SK-N-SH (cell line): ENCODE measurements at regions of chr2 and their contacts with region 1.

Region 1: DNA sequence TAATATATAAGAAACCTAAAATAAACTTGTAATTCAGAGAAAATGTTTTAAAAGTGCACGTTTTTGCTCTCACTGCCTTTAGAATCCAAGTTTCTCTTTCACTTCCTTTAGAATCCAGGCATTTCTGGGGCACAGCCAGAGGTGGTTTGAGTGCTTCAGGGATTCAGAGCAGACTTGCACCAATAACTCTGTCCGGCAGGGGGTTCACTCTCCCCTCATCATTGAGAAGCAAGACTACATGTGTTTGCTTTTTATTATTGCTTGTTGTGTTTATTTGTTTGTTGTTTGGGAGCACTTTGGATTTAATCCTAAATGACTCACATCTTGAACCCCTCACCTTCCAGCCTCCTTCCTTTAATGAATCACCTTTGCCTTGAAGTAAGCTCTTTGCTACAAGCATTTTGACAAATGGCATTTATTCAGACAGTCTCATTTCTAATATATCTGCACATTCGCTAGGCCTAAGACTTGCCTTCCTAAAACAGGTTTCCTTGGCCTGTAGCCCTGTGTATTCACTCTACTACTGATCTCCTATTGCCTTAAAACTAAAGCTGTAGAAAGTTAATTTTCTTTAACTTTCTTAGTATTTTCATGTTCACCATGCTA is 233.5 kb upstream of the ATP5MC3 start:
- DNase-seq: peak; percentile 58
- H3K4me3 ChIP-seq: no peak overlapping the region; a peak in 1 of 4 replicates
- H3K27ac ChIP-seq: no peak overlapping the region
- H3K4me1 ChIP-seq: peaks cover 0 to 12% of the 10 kb centered on the region in 2 experiments; a peak in 2 of 4 replicates
- H3K27me3 ChIP-seq: no peaks in the 10 kb centered on the region
- CTCF ChIP-seq: peak; percentile 68
- EP300 ChIP-seq: no peak
- RAD21 ChIP-seq: peak; percentile 79

Region 2: DNA sequence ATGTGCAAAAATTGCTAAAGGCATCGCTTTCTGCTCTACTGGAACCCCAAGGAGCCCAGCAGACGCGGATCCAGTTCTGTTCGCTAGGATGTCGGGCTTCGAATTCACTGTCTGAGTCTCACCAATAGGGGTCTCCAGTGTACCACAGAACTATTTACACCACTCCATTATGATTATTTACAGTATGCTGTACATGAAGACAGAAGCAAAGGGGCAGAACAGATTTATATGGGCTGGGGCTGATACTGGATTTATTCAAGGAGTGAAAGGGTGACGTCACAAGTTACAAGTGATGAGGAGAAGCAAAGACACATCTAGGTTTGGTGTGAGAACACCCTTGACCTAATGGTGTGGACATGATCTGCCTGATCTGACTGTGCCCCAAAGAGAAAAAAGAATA is 48.2 kb before region 1 on chr2:
- CTCF ChIA-PET with region 1: interaction called, 19 read pairs
- POLR2A ChIA-PET with region 1: no interaction called
- DNase-seq: peak; percentile 49
- H3K4me3 ChIP-seq: peak overlapping the region in 1 of 2 experiments; percentile 47; a peak in 1 of 4 replicates
- H3K27ac ChIP-seq: no peak overlapping the region
- H3K4me1 ChIP-seq: peaks cover 0 to 19% of the 10 kb centered on the region in 2 experiments; a peak in 2 of 4 replicates
- H3K27me3 ChIP-seq: no peaks in the 10 kb centered on the region; the same call in 1 of the 2 replicates
- CTCF ChIP-seq: peak; percentile 83
- EP300 ChIP-seq: no peak; a peak in 1 of 4 replicates
- RAD21 ChIP-seq: peak; percentile 94

Region 3: DNA sequence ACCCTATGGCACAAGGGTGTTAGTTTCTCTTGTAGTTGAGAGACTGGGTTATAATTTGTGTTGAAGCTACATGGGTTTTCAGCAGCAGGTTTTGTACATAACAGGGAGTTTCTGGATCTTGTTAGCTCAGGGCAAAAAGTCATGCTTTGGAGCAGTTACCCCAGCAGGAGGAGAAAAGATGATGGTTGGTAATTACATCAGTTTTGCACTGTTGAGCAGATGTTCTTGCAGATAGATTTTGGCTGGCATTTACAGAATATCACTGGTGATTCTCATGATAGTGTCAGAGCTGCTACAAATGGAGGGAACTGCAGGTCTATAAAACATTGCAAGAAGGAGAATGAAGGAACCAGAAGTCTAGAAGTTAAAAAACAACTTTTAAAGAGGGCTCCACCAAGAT is 18.3 kb before region 1 on chr2:
- CTCF ChIA-PET with region 1: interaction called, 11 read pairs
- POLR2A ChIA-PET with region 1: no interaction called
- DNase-seq: peak; percentile 47
- H3K4me3 ChIP-seq: no peak overlapping the region
- H3K27ac ChIP-seq: peak overlapping the region in 1 of 2 experiments; percentile 72; a peak in 2 of 4 replicates
- H3K4me1 ChIP-seq: peaks cover 0 to 8% of the 10 kb centered on the region in 2 experiments; a peak in 2 of 4 replicates
- H3K27me3 ChIP-seq: no peaks in the 10 kb centered on the region
- CTCF ChIP-seq: no peak
- EP300 ChIP-seq: peak in 1 of 2 experiments; percentile 96; a peak in 2 of 4 replicates
- RAD21 ChIP-seq: peak; percentile 37

Region 4: GRCh38 chr2:175441181-175441761 is 26.3 kb after region 1 on chr2:
- CTCF ChIA-PET with region 1: interaction called, 12 read pairs
- POLR2A ChIA-PET with region 1: no interaction called
- DNase-seq: no peak
- H3K4me3 ChIP-seq: no peak overlapping the region
- H3K27ac ChIP-seq: no peak overlapping the region
- H3K4me1 ChIP-seq: peaks cover 0 to 12% of the 10 kb centered on the region in 2 experiments; a peak in 3 of 4 replicates
- H3K27me3 ChIP-seq: peaks cover 5% of the 10 kb centered on the region; the same call in 1 of the 2 replicates
- CTCF ChIP-seq: no peak
- EP300 ChIP-seq: no peak
- RAD21 ChIP-seq: no peak

Region 5: DNA sequence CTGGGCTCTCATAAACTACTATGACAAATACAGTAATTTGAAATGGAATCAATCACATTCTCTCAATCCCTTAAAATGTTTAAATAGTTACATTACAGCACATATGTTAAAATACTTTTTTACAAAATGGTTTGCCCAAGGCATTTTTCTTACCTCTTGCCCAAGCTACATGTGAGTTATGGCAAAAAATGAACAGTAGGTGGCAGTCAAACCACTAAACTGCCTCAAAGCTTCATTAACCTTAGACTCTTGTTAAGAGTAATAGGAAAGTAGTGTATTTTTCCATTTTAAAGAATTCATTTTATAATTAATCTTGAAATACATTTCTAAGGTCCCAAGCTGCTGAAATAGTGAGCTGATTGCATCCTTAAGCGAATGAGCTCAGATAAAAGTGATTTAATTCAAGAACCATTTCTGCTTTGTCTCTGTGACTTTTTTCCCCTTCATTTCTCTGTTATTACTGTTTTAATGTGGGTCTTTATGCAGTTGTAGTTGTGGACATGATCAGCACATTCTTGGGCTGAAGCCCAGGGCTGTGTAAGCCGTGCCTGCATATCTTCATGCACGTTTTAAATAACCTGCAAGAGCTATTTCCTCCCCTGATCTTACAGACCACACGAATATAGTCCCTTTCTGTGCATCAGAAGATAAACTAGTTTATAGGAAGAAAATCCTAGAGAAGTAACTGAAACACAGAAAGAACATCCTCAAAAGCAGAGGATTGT is 275.3 kb after region 1 on chr2:
- CTCF ChIA-PET with region 1: interaction called, 33 read pairs
- POLR2A ChIA-PET with region 1: no interaction called
- DNase-seq: peak; percentile 24
- H3K4me3 ChIP-seq: no peak overlapping the region
- H3K27ac ChIP-seq: no peak overlapping the region
- H3K4me1 ChIP-seq: peaks cover 0 to 15% of the 10 kb centered on the region in 2 experiments; a peak in 2 of 4 replicates
- H3K27me3 ChIP-seq: peaks cover 8% of the 10 kb centered on the region; the same call in 1 of the 2 replicates
- CTCF ChIP-seq: peak; percentile 83
- EP300 ChIP-seq: no peak
- RAD21 ChIP-seq: peak; percentile 90

Region 6: GRCh38 chr2:176079831-176080539 is 665.0 kb after region 1 on chr2:
- CTCF ChIA-PET with region 1: interaction called, 25 read pairs
- POLR2A ChIA-PET with region 1: no interaction called
- DNase-seq: peak; percentile 95
- H3K4me3 ChIP-seq: peak overlapping the region; percentile 39 to 52
- H3K27ac ChIP-seq: no peak overlapping the region
- H3K4me1 ChIP-seq: peaks cover 0 to 23% of the 10 kb centered on the region in 2 experiments; a peak in 1 of 4 replicates
- H3K27me3 ChIP-seq: peaks cover 70% of the 10 kb centered on the region
- CTCF ChIP-seq: peak; percentile 87
- EP300 ChIP-seq: no peak
- RAD21 ChIP-seq: peak; percentile 63

Region 7: GRCh38 chr2:176088048-176088936 is 673.3 kb after region 1 on chr2:
- CTCF ChIA-PET with region 1: interaction called, 19 read pairs
- POLR2A ChIA-PET with region 1: no interaction called
- DNase-seq: peak; percentile 86
- H3K4me3 ChIP-seq: peak overlapping the region; percentile 40 to 52
- H3K27ac ChIP-seq: no peak overlapping the region
- H3K4me1 ChIP-seq: peaks cover 0 to 24% of the 10 kb centered on the region in 2 experiments; a peak in 1 of 4 replicates
- H3K27me3 ChIP-seq: peaks cover 95% of the 10 kb centered on the region
- CTCF ChIP-seq: peak; percentile 78
- EP300 ChIP-seq: no peak
- RAD21 ChIP-seq: peak; percentile 75